Activated CD4-positive, alpha-beta T cell treated with anti-CD3 and anti-CD28 coated beads, Interleukin-2, amount 10 ng/mL, durations not matched to agents 7 days and 5 days (primary cell): ENCODE measurements at regions of chr3 and their contacts with region 1.

Region 1: DNA sequence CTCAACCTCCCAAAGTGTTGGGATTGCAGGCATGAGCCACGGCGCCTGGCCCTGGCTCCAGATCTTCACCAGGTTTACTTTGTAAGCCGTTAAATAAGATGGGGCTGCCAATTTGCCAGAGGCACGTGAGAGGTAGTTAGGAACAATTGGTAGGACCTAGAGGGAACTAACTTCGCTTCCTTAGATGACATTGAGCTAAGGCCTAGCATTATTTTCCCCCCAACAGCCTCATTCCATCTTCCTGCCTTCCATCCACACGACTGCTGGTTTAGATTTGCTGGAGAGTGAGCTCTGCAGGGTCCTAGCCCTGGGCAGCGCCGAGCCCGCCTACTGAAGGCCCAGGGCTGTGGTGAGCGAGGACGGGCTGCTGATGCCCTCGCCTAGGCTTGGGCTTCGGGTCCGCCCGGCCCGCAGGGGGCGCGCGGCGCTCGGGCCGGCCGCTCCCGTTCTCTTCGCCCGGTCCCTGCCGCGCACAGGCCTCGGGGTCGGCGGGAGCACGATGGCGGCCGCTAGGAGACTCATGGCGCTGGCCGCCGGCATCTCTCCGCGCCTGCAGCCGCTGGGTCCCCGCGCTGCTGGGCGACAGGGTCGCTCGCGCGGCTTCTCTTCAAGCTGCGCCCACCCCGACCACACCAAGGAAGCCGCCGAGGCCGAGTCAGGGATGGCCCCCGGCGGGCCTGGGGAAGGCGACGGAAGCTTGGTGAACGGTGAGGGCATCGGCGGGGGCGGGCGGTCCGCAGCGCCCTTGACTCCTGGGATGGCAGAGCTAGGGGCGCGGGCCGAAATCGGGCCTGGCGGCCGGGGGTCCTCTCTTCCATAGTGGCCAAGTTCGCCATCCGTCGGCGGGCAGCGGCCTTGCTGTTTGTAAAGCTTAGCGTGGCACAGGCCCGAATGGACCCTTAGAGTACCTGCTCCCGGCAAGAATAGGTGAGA is 21.9 kb downstream of the DHX30 start:
- DNase-seq: peak; percentile 74
- H3K4me3 Mint-ChIP-seq: peak overlapping the region; percentile 89
- H3K27ac Mint-ChIP-seq: peak overlapping the region; percentile 90
- H3K4me1 Mint-ChIP-seq: peaks cover 35% of the 10 kb centered on the region
- H3K27me3 Mint-ChIP-seq: no peaks in the 10 kb centered on the region

Region 2: GRCh38 chr3:47522082-47522987 is 302.5 kb before region 1 on chr3:
- CTCF ChIA-PET with region 1: interaction called, 19 read pairs
- POLR2A ChIA-PET with region 1: no interaction called
- DNase-seq: peak; percentile 84
- H3K4me3 Mint-ChIP-seq: no peak overlapping the region
- H3K27ac Mint-ChIP-seq: peak overlapping the region; percentile 33
- H3K4me1 Mint-ChIP-seq: peaks cover 11% of the 10 kb centered on the region
- H3K27me3 Mint-ChIP-seq: no peaks in the 10 kb centered on the region

Region 3: GRCh38 chr3:47716656-47717055 is 108.2 kb before region 1 on chr3:
- CTCF ChIA-PET with region 1: no interaction called
- POLR2A ChIA-PET with region 1: no interaction called
- DNase-seq: no peak
- H3K4me3 Mint-ChIP-seq: no peak overlapping the region
- H3K27ac Mint-ChIP-seq: no peak overlapping the region
- H3K4me1 Mint-ChIP-seq: peaks cover 5% of the 10 kb centered on the region
- H3K27me3 Mint-ChIP-seq: no peaks in the 10 kb centered on the region

Region 4: DNA sequence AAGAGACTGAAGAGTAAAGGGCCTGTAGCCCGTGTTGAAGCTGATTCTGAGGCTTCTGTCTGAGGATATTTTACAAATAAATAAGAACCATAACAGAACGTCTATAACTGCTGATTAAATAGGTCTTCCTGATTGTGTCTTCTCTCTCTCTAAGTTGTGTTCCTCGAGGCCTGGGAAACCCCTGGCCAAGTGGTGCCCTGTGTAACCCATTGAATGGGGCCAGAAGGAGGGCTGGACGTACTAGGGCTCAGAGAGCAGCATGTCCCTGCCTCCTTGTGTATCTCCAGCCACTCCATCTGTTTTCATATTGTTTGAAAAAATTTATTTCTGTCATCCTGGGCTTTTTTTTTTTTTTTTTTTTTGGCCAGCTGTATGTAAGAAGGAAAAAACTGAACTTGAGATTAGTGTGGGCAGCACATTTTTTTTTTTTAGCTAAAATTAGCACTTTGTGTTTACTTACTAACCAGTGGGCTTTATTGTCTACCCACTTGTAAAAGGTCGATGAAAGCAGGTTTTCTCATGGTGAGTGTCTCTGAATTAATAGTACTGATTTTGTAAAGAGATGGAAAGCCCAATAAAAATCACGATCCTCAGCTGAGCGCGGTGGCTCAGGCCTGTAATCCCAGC is 11.1 kb before region 1 on chr3:
- CTCF ChIA-PET with region 1: interaction called, 19 read pairs
- POLR2A ChIA-PET with region 1: no interaction called
- DNase-seq: no peak
- H3K4me3 Mint-ChIP-seq: no peak overlapping the region
- H3K27ac Mint-ChIP-seq: no peak overlapping the region
- H3K4me1 Mint-ChIP-seq: no peaks in the 10 kb centered on the region
- H3K27me3 Mint-ChIP-seq: no peaks in the 10 kb centered on the region

Region 5: GRCh38 chr3:47836986-47837385 is 12.2 kb after region 1 on chr3:
- CTCF ChIA-PET with region 1: interaction called, 31 read pairs
- POLR2A ChIA-PET with region 1: no interaction called
- DNase-seq: no peak
- H3K4me3 Mint-ChIP-seq: no peak overlapping the region
- H3K27ac Mint-ChIP-seq: no peak overlapping the region
- H3K4me1 Mint-ChIP-seq: no peaks in the 10 kb centered on the region
- H3K27me3 Mint-ChIP-seq: no peaks in the 10 kb centered on the region

Region 6: DNA sequence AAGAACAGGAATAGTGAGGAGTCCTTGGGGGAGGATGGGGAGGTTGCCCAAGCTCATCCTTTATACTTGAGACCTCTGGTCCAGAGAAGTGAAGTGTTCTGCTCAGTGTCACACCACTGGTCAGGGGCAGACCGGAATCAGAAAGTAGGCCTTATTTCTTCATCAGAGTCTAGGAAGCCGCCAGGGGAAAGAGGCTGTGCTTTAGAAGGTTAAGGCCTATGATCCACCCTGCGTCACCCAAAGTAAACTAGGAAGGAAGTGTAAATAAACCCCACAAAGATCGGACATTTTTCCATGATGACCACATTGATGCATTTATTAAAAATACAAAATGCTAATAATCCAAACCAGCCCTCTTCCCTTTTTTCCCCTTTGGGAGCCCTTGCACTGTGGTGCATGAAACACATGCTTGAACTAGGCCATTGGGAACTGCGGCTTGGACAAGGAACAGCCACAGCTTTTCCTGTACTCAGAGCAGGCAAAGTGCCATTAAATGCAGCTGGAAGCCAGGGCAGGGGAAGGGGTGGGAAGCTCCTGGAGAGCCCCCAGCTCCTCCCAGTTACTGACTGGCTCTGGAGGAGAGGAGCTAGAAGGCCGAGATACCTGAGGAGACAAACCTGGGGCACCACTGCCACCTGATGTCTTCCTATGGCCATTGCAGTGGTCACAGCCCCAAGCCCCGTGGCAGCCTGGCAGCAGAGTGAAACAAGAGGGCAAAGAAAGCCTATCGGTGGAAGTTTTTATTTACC is 326.4 kb after region 1 on chr3:
- CTCF ChIA-PET with region 1: interaction called, 12 read pairs
- POLR2A ChIA-PET with region 1: no interaction called
- DNase-seq: peak; percentile 73
- H3K4me3 Mint-ChIP-seq: no peak overlapping the region
- H3K27ac Mint-ChIP-seq: peak overlapping the region; percentile 43
- H3K4me1 Mint-ChIP-seq: peaks cover 2% of the 10 kb centered on the region
- H3K27me3 Mint-ChIP-seq: no peaks in the 10 kb centered on the region